A673 (cell line): ENCODE measurements at regions of chrX and their contacts with region 1.

Region 1: GRCh38 chrX:44054863-44055601 is 81.8 kb upstream of the NDP start:
- DNase-seq: no peak
- H3K4me3 ChIP-seq: no peak overlapping the region
- H3K27ac ChIP-seq: no peak overlapping the region
- H3K4me1 ChIP-seq: no peaks in the 10 kb centered on the region
- H3K27me3 ChIP-seq: peaks cover 8% of the 10 kb centered on the region
- CTCF ChIP-seq: no peak

Region 2: GRCh38 chrX:44071847-44072545 is 17.0 kb after region 1 on chrX:
- CTCF ChIA-PET with region 1: no interaction called
- POLR2A ChIA-PET with region 1: interaction called, 10 read pairs
- intact Hi-C with region 1: no loop called
- DNase-seq: peak; percentile 46
- H3K4me3 ChIP-seq: no peak overlapping the region
- H3K27ac ChIP-seq: no peak overlapping the region
- H3K4me1 ChIP-seq: no peaks in the 10 kb centered on the region
- H3K27me3 ChIP-seq: no peaks in the 10 kb centered on the region
- CTCF ChIP-seq: no peak